Calu3 (cell line): ENCODE measurements at regions of chr1 and their contacts with region 1.

Region 1: DNA sequence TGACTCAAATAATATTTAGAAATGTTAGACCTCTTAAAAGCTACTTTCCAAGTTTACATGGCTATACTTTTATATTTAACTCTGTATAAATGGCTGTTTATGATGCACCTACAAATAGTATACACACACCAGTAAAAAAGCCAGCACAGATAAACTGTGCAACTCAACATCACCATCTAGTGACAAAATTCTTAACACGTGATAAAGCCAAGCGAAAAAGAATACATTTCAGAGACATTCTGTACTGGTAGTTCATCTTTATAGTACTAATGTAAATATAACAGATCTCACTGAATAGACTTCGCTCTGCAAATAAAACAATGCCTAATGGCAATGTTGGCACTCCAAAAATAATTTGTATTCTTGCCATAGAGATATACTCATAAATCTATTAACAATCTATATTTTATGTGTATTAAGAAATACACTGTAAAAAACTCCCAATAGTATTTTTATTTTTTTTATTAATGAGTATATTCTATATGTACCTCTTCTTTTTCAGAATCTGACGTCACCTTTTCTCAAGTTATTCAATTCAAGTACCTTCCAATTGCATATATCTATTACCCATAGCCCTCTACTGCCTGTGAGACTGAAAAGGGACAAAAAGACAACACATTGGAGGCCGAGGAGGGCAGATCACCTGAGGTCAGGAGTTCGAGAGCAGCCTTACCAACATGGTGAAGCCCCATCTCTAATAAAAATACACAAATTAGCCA is 100.2 kb downstream of the DPYD start:
- DNase-seq: peak; percentile 6
- H3K4me3 Mint-ChIP-seq: no peak overlapping the region
- H3K27ac Mint-ChIP-seq: no peak overlapping the region
- H3K4me1 Mint-ChIP-seq: no peaks in the 10 kb centered on the region
- H3K27me3 Mint-ChIP-seq: no peaks in the 10 kb centered on the region
- CTCF ChIP-seq: no peak

Region 2: GRCh38 chr1:97137862-97138514 is 682.6 kb before region 1 on chr1:
- CTCF ChIA-PET with region 1: no interaction called
- intact Hi-C with region 1: loop called (anchors 5 kb)
- DNase-seq: peak; percentile 36
- H3K4me3 Mint-ChIP-seq: no peak overlapping the region
- H3K27ac Mint-ChIP-seq: no peak overlapping the region
- H3K4me1 Mint-ChIP-seq: peaks cover 6% of the 10 kb centered on the region
- H3K27me3 Mint-ChIP-seq: no peaks in the 10 kb centered on the region
- CTCF ChIP-seq: no peak

Region 3: DNA sequence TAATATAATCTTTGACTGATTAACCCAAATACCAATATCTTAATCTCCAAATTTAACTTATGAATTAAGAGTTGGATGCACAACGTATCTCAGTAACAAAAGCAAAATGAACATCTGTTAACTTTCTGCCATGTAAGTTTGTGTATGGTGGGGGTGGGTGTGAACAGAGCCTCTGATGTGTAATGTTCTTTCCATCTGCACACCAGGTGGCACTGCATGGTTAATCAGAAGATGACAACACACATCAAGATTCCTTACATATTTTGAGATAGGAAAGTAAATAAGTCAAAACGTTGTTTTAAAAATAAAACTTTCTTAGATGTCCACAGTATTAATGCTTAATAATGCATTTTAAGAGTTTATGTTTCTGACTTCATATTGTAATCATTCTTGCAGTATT is 151.7 kb before region 1 on chr1:
- CTCF ChIA-PET with region 1: no interaction called
- intact Hi-C with region 1: loop called (anchors 1 kb)
- DNase-seq: peak; percentile 15
- H3K4me3 Mint-ChIP-seq: no peak overlapping the region
- H3K27ac Mint-ChIP-seq: no peak overlapping the region
- H3K4me1 Mint-ChIP-seq: no peaks in the 10 kb centered on the region
- H3K27me3 Mint-ChIP-seq: no peaks in the 10 kb centered on the region
- CTCF ChIP-seq: no peak

Region 4: GRCh38 chr1:97758541-97759057 is 62.0 kb before region 1 on chr1:
- CTCF ChIA-PET with region 1: no interaction called
- intact Hi-C with region 1: no loop called
- DNase-seq: no peak
- H3K4me3 Mint-ChIP-seq: no peak overlapping the region
- H3K27ac Mint-ChIP-seq: no peak overlapping the region
- H3K4me1 Mint-ChIP-seq: no peaks in the 10 kb centered on the region
- H3K27me3 Mint-ChIP-seq: no peaks in the 10 kb centered on the region
- CTCF ChIP-seq: no peak

Region 5: GRCh38 chr1:97832481-97832880 is 11.9 kb after region 1 on chr1:
- CTCF ChIA-PET with region 1: interaction called, 10 read pairs
- intact Hi-C with region 1: no loop called
- DNase-seq: no peak
- H3K4me3 Mint-ChIP-seq: no peak overlapping the region
- H3K27ac Mint-ChIP-seq: no peak overlapping the region
- H3K4me1 Mint-ChIP-seq: no peaks in the 10 kb centered on the region
- H3K27me3 Mint-ChIP-seq: no peaks in the 10 kb centered on the region
- CTCF ChIP-seq: no peak